H1 (cell line): ENCODE measurements at regions of chr9 and their contacts with region 1.

Region 1: GRCh38 chr9:101486693-101487442 is 46.8 kb upstream of the RNF20 start:
- DNase-seq: peak; percentile 72 to 87
- H3K4me3 ChIP-seq: peak overlapping the region; percentile 70 to 87 (median 74)
- H3K27ac ChIP-seq: peak overlapping the region; percentile 25; the same call in 1 of the 2 replicates
- H3K4me1 ChIP-seq: peaks cover 5 to 9% (median 7%) of the 10 kb centered on the region in 4 experiments; a peak in 6 of 7 replicates
- H3K27me3 ChIP-seq: peaks cover 0 to 5% (median 2%) of the 10 kb centered on the region in 4 experiments; a peak in 5 of 7 replicates
- CTCF ChIP-seq: peak; percentile 61 to 70 (median 67)
- EP300 ChIP-seq: no peak
- POLR2A ChIP-seq: peak; percentile 17 to 60; a peak in 2 of 3 replicates
- RAD21 ChIP-seq: peak; percentile 67 to 72

Region 2: GRCh38 chr9:101376111-101376848 is 110.6 kb before region 1 on chr9:
- CTCF ChIA-PET with region 1: no interaction called
- POLR2A ChIA-PET with region 1: no interaction called
- DNase-seq: no peak
- H3K4me3 ChIP-seq: no peak overlapping the region
- H3K27ac ChIP-seq: no peak overlapping the region
- H3K4me1 ChIP-seq: no peaks in the 10 kb centered on the region; a peak in 1 of 7 replicates
- H3K27me3 ChIP-seq: no peaks in the 10 kb centered on the region
- CTCF ChIP-seq: no peak
- EP300 ChIP-seq: no peak
- POLR2A ChIP-seq: no peak
- RAD21 ChIP-seq: no peak

Region 3: DNA sequence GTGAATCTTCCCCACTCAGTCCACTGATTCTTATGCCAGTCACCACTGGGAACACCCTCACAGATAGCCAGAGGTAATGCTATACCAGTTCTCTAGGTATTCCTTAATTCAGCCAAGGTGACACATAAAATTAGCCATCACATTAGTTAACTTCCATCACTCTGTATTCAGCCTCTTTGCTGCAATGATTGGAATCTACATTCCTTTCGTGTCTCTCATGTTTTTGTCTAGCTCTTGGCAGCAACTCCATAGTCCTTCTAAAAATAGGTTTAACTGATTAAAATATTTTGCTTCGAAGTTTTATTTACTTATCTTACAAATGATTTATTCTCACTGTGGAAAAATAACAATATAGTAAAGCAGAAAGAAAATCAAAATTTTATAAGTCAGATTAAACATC is 27.2 kb after region 1 on chr9:
- CTCF ChIA-PET with region 1: interaction called, 3 read pairs
- POLR2A ChIA-PET with region 1: interaction called, 13 read pairs
- DNase-seq: no peak
- H3K4me3 ChIP-seq: 0 out of 8 replicates have a peak overlapping the region, but pooled peaks of 1 of the 4 experiments have one; percentile 8
- H3K27ac ChIP-seq: no peak overlapping the region
- H3K4me1 ChIP-seq: peaks cover 2 to 16% (median 13%) of the 10 kb centered on the region in 4 experiments; a peak in 6 of 7 replicates
- H3K27me3 ChIP-seq: no peaks in the 10 kb centered on the region
- CTCF ChIP-seq: no peak
- EP300 ChIP-seq: no peak
- POLR2A ChIP-seq: no peak
- RAD21 ChIP-seq: no peak